ENCODE measurements at regions of chr11 and their contacts with region 1.

Region 1: GRCh38 chr11:102495161-102496042 is 35.1 kb downstream of the MMP7 start:
- DNase-seq: no peak
- ATAC-seq: peak; percentile 77
- H3K4me3 Mint-ChIP-seq: no peak overlapping the region
- H3K27ac Mint-ChIP-seq: peak overlapping the region; percentile 53
- H3K4me1 Mint-ChIP-seq: peaks cover 17% of the 10 kb centered on the region
- H3K27me3 Mint-ChIP-seq: no peaks in the 10 kb centered on the region
- CTCF ChIP-seq: no peak

Region 2: GRCh38 chr11:102007567-102008437 is 487.6 kb before region 1 on chr11:
- CTCF ChIA-PET with region 1: no interaction called
- POLR2A ChIA-PET with region 1: no interaction called
- intact Hi-C with region 1: loop called (anchors 10 kb)
- DNase-seq: no peak
- ATAC-seq: no peak
- H3K4me3 Mint-ChIP-seq: no peak overlapping the region
- H3K27ac Mint-ChIP-seq: no peak overlapping the region
- H3K4me1 Mint-ChIP-seq: no peaks in the 10 kb centered on the region
- H3K27me3 Mint-ChIP-seq: peaks cover 11% of the 10 kb centered on the region
- CTCF ChIP-seq: peak; percentile 81

Region 3: DNA sequence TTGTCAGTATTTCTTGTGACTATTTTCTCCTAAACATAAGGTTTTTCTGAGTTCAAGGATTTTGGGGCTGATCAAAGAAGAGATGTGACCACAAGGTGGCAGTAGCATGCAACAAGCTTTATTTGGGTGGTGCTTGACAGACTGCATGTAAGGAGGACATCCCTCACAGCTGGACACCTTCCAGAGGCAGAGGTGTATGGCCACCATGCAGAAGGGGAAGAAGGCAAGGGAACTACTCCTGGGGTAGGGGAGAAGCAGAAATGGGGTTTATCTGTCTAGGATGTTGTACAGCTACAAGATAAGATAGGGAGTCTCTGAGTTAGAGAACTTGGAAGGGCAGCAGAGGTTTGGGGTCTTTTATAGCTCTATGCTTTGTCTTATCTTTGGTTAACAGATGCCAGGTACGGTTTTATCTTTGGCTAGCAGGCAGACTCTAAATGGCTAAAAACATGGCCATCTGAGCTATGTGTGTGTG is 153.5 kb before region 1 on chr11:
- CTCF ChIA-PET with region 1: interaction called, 25 read pairs
- POLR2A ChIA-PET with region 1: interaction called, 3 read pairs
- intact Hi-C with region 1: loop called (anchors 1 kb)
- DNase-seq: no peak
- ATAC-seq: peak; percentile 37
- H3K4me3 Mint-ChIP-seq: no peak overlapping the region
- H3K27ac Mint-ChIP-seq: peak overlapping the region; percentile 42
- H3K4me1 Mint-ChIP-seq: peaks cover 29% of the 10 kb centered on the region
- H3K27me3 Mint-ChIP-seq: no peaks in the 10 kb centered on the region
- CTCF ChIP-seq: peak; percentile 50

Region 4: DNA sequence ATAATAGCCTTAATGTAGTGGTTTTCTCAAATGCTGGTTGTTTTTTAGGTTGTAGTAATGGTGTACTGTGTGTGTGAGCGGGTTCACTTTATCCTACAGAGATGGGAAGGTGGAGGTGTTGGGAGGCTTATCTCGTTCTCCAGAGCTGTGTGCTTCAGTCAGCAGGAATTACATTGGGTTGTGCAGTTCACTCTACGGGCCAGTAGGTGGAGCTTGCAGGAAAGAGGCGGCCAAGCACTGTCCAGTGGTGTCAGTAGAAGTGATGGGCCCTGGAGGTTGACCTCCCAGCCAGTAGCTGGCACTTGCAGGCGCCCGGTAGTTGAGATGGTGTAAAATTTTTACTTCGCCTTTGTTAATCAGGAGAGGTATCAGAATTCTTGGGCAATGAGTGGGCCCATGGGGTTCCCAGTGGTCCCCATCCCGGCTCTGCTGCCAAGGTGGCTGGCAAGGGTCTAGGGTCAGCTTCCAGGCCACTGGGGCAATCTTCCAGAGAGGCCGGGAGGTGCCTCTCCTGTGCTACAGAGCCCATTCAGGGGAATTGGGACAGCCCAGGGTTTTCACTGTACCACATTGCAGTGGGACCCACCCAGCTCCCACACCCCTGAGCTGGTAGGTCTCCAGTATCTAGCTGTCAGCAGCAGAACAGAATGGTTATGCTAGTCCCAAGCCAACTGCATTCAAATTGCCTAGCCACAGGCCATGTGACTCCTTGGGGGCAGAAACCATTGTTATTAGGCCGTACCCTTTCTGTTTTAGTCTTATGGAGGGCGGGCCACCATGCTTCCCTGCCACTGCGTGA is 104.5 kb before region 1 on chr11:
- CTCF ChIA-PET with region 1: interaction called, 46 read pairs
- POLR2A ChIA-PET with region 1: no interaction called
- intact Hi-C with region 1: loop called (anchors 1 kb)
- DNase-seq: peak; percentile 37
- ATAC-seq: peak; percentile 95
- H3K4me3 Mint-ChIP-seq: no peak overlapping the region
- H3K27ac Mint-ChIP-seq: no peak overlapping the region
- H3K4me1 Mint-ChIP-seq: peaks cover 13% of the 10 kb centered on the region
- H3K27me3 Mint-ChIP-seq: no peaks in the 10 kb centered on the region
- CTCF ChIP-seq: peak; percentile 85

Region 5: GRCh38 chr11:102476812-102477211 is 18.6 kb before region 1 on chr11:
- CTCF ChIA-PET with region 1: interaction called, 7 read pairs
- POLR2A ChIA-PET with region 1: interaction called, 3 read pairs
- intact Hi-C with region 1: loop called (anchors 1 kb)
- DNase-seq: no peak
- ATAC-seq: no peak
- H3K4me3 Mint-ChIP-seq: peak overlapping the region; percentile 17
- H3K27ac Mint-ChIP-seq: peak overlapping the region; percentile 65
- H3K4me1 Mint-ChIP-seq: peaks cover 47% of the 10 kb centered on the region
- H3K27me3 Mint-ChIP-seq: no peaks in the 10 kb centered on the region
- CTCF ChIP-seq: no peak